B cell (primary cell): ENCODE measurements at regions of chr17 and their contacts with region 1.

Region 1: GRCh38 chr17:74212913-74213791 is at the start of gene TTYH2:
- DNase-seq: peak; percentile 84
- ATAC-seq: peak; percentile 77
- H3K4me3 ChIP-seq: peak within 1 kb of the TSS; percentile 23 to 73 (median 55)
- H3K4me3 Mint-ChIP-seq: peak within 1 kb of the TSS; percentile 81
- H3K27ac ChIP-seq: peak within 1 kb of the TSS; percentile 27 to 55
- H3K27ac Mint-ChIP-seq: peak within 1 kb of the TSS; percentile 89
- H3K4me1 ChIP-seq: peaks cover 35 to 44% of the 10 kb centered on the region in 2 donors
- H3K4me1 Mint-ChIP-seq: peaks cover 50% of the 10 kb centered on the region
- H3K27me3 ChIP-seq: no peaks in the 10 kb centered on the region
- H3K27me3 Mint-ChIP-seq: no peaks in the 10 kb centered on the region
- CTCF ChIP-seq: peak; percentile 32
- total RNA-seq, gene TTYH2: 3.1 and 3.8 TPM in 2 replicates

Region 2: GRCh38 chr17:73697872-73698271 is 515.3 kb before region 1 on chr17:
- CTCF ChIA-PET with region 1: no interaction called
- POLR2A ChIA-PET with region 1: no interaction called
- intact Hi-C with region 1: no loop called
- DNase-seq: no peak
- ATAC-seq: no peak
- H3K4me3 ChIP-seq: no peak overlapping the region
- H3K4me3 Mint-ChIP-seq: no peak overlapping the region
- H3K27ac ChIP-seq: no peak overlapping the region
- H3K27ac Mint-ChIP-seq: no peak overlapping the region
- H3K4me1 ChIP-seq: no peaks in the 10 kb centered on the region
- H3K4me1 Mint-ChIP-seq: no peaks in the 10 kb centered on the region
- H3K27me3 ChIP-seq: no peaks in the 10 kb centered on the region
- H3K27me3 Mint-ChIP-seq: peaks cover 10% of the 10 kb centered on the region
- CTCF ChIP-seq: no peak

Region 3: DNA sequence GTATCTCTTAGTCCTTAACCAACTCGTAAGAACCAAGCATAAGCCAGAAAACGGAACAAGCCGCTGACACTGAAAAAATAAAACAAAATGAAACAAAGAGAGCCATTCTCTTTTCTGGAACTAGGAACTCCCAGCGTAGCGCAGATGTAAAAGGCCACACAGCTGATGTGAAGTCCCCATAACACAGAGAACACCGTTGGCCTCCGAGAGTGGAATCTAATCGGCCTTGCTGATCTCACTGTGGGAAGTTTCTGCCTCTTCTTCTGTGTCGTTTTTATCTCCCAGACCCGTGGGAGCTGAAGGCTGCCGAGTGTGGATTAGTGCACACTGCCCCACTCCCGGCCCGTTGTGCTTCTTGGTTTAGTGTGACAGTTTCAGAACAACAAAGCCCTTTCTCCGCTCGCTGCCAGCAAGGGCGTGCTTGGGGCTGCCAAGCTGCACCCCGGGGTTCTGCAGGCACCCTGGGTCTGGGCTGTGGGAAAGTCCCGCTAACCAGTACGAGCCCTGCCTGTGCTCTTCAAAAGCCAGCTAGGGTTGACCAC is 22.0 kb after region 1 on chr17:
- CTCF ChIA-PET with region 1: interaction called, 3 read pairs
- POLR2A ChIA-PET with region 1: no interaction called
- intact Hi-C with region 1: loop called (anchors 2 kb)
- DNase-seq: peak; percentile 46
- ATAC-seq: no peak
- H3K4me3 ChIP-seq: peak overlapping the region; percentile 24 to 56 (median 36)
- H3K4me3 Mint-ChIP-seq: peak overlapping the region; percentile 78
- H3K27ac ChIP-seq: peak overlapping the region; percentile 16 to 51
- H3K27ac Mint-ChIP-seq: peak overlapping the region; percentile 85
- H3K4me1 ChIP-seq: peaks cover 12 to 17% of the 10 kb centered on the region in 2 donors
- H3K4me1 Mint-ChIP-seq: peaks cover 15% of the 10 kb centered on the region
- H3K27me3 ChIP-seq: no peaks in the 10 kb centered on the region
- H3K27me3 Mint-ChIP-seq: no peaks in the 10 kb centered on the region
- CTCF ChIP-seq: no peak

Region 4: DNA sequence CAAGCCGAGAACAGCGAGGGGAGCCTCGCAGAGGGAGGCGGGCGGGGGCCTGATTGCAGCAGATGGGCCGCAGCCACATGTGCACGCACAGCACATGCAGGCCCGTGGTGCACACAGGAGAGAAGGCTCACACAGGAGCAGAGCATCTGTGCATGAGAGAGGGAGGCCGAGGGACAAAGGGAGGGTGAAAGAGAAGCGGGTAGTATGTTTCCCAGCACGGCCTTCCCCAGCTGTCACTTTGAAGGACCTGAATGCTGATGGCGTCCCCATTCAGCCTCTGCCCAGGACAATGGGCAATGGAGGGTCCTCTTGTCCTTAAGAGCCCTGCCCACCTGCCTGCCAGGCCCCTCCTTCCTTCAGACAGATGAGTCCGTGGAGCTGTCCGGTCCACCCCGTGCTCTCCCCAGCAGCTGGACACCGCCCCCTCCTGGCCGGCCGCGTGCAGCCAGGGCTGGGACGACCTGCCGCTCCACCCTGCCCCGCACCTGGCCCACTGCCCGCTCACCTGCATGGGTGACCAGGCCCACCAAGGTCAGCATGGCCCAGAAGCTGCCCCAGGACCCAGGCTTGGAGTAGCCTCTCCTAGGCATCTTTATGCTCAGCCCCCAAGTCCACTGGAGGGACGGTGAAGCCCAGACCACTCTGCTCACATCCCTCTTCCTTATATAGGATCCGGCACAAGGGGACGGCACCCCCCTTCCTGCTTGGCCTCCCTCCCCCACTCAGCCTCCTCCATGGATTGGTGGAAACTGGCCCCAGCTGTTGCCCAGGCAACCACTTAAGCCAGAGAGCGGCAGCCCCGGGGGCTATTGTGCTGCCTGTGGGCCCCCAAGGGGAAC is 148.3 kb after region 1 on chr17 and contains the start of gene BTBD17:
- CTCF ChIA-PET with region 1: interaction called, 8 read pairs
- POLR2A ChIA-PET with region 1: no interaction called
- intact Hi-C with region 1: loop called (anchors 1 kb)
- DNase-seq: peak; percentile 30
- ATAC-seq: peak; percentile 45
- H3K4me3 ChIP-seq: no peak within 1 kb of the TSS
- H3K4me3 Mint-ChIP-seq: no peak within 1 kb of the TSS
- H3K27ac ChIP-seq: no peak within 1 kb of the TSS
- H3K27ac Mint-ChIP-seq: no peak within 1 kb of the TSS
- H3K4me1 ChIP-seq: peaks cover 0 to 7% of the 10 kb centered on the region in 2 donors
- H3K4me1 Mint-ChIP-seq: peaks cover 2% of the 10 kb centered on the region
- H3K27me3 ChIP-seq: peaks cover 0 to 36% (median 7%) of the 10 kb centered on the region in 4 experiments
- H3K27me3 Mint-ChIP-seq: peaks cover 36% of the 10 kb centered on the region
- CTCF ChIP-seq: peak; percentile 41
- total RNA-seq, gene BTBD17: not detected in 2 replicates

Region 5: DNA sequence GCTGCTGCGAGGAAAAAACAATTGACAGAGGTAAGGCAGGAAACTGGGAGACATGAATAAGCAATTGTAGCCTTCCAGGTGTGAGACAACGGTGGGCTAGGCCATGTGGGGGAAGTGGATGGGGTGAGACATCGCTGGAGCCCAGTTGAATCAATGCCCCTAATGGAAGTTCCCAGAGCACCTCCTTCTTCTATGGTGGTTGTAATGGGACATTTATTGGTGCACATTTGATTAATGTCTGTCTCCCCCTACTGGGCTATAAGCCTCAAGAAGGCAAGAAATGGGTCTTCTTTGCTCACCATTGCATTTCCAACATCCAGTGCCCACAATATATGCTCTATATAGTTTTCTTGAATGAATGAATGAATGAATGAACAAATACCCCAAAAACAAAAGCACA is 433.1 kb after region 1 on chr17:
- CTCF ChIA-PET with region 1: no interaction called
- POLR2A ChIA-PET with region 1: no interaction called
- intact Hi-C with region 1: no loop called
- DNase-seq: peak; percentile 60
- ATAC-seq: peak; percentile 50
- H3K4me3 ChIP-seq: no peak overlapping the region
- H3K4me3 Mint-ChIP-seq: no peak overlapping the region
- H3K27ac ChIP-seq: no peak overlapping the region
- H3K27ac Mint-ChIP-seq: peak overlapping the region; percentile 50
- H3K4me1 ChIP-seq: peaks cover 32 to 37% of the 10 kb centered on the region in 2 donors
- H3K4me1 Mint-ChIP-seq: peaks cover 43% of the 10 kb centered on the region
- H3K27me3 ChIP-seq: peaks cover 0 to 32% (median 12%) of the 10 kb centered on the region in 4 experiments
- H3K27me3 Mint-ChIP-seq: peaks cover 47% of the 10 kb centered on the region
- CTCF ChIP-seq: peak; percentile 56

Region 6: DNA sequence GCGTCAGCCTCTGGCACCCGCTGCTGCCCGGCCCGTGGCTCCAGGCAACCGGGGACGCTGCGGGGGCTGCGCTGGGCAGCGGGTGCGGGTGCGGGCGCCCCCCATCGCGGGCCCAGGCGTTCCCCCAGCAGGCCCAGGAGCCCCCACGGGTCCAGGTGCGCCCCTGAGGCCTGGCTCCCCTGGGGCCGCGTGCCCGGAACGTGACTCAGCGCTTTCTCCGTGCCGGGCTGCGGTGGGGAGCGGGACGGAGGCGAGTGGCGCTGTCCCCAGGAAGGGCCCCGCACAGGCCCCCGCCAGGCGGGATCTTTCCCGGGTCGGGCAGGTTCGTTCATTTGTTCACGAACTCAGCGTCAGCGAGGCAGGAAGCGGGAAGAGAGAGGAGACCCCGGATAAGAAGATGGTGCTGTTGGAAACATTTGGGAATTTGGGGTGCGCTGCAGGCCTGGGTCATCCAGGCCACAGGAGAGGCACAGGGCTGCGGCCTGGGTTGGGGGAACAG is 1908.8 kb after region 1 on chr17:
- CTCF ChIA-PET with region 1: no interaction called
- POLR2A ChIA-PET with region 1: no interaction called
- intact Hi-C with region 1: no loop called
- DNase-seq: peak; percentile 49
- ATAC-seq: peak; percentile 11
- H3K4me3 ChIP-seq: peak overlapping the region in 4 of 5 experiments; percentile 32 to 66 (median 50)
- H3K4me3 Mint-ChIP-seq: peak overlapping the region; percentile 71
- H3K27ac ChIP-seq: no peak overlapping the region
- H3K27ac Mint-ChIP-seq: peak overlapping the region; percentile 53
- H3K4me1 ChIP-seq: peaks cover 18 to 21% of the 10 kb centered on the region in 2 donors
- H3K4me1 Mint-ChIP-seq: peaks cover 16% of the 10 kb centered on the region
- H3K27me3 ChIP-seq: peaks cover 0 to 6% (median 0%) of the 10 kb centered on the region in 4 experiments
- H3K27me3 Mint-ChIP-seq: peaks cover 2% of the 10 kb centered on the region
- CTCF ChIP-seq: no peak